Ovary (tissue), 10 donors: ENCODE measurements at regions of chr10 and their contacts with region 1.

Region 1: GRCh38 chr10:119650692-119651513 is at the start of gene BAG3:
- DNase-seq: peak; percentile 94 to 97 (median 95)
- H3K4me3 ChIP-seq: peak within 1 kb of the TSS; percentile 80
- H3K27ac ChIP-seq: peak within 1 kb of the TSS; percentile 88 to 93
- H3K4me1 ChIP-seq: peaks cover 11% of the 10 kb centered on the region
- H3K27me3 ChIP-seq: no peaks in the 10 kb centered on the region
- CTCF ChIP-seq: no peak
- EP300 ChIP-seq: no peak
- POLR2A ChIP-seq: peak; percentile 70
- total RNA-seq, gene BAG3: 13.7 to 33.5 (median 29.6) TPM

Region 2: GRCh38 chr10:119596537-119597404 is 54.1 kb before region 1 on chr10 and contains the start of gene TIAL1:
- intact Hi-C with region 1: loop called in 2 of 4 experiments (anchors 5 to 10 kb)
- DNase-seq: peak; percentile 95 to 97 (median 96)
- H3K4me3 ChIP-seq: peak within 1 kb of the TSS; percentile 96
- H3K27ac ChIP-seq: peak within 1 kb of the TSS; percentile 93 to 99
- H3K4me1 ChIP-seq: peaks cover 3% of the 10 kb centered on the region
- H3K27me3 ChIP-seq: no peaks in the 10 kb centered on the region
- CTCF ChIP-seq: peak in 1 of 3 donors; percentile 10
- EP300 ChIP-seq: no peak
- POLR2A ChIP-seq: no peak
- total RNA-seq, gene TIAL1: 58.9 to 113 (median 110) TPM

Region 3: GRCh38 chr10:119602241-119603095 is 48.4 kb before region 1 on chr10:
- intact Hi-C with region 1: loop called in 2 of 4 experiments (anchors 5 to 10 kb)
- DNase-seq: no peak
- H3K4me3 ChIP-seq: no peak overlapping the region
- H3K27ac ChIP-seq: no peak overlapping the region
- H3K4me1 ChIP-seq: peaks cover 1% of the 10 kb centered on the region
- H3K27me3 ChIP-seq: no peaks in the 10 kb centered on the region
- CTCF ChIP-seq: no peak
- EP300 ChIP-seq: no peak
- POLR2A ChIP-seq: no peak

Region 4: DNA sequence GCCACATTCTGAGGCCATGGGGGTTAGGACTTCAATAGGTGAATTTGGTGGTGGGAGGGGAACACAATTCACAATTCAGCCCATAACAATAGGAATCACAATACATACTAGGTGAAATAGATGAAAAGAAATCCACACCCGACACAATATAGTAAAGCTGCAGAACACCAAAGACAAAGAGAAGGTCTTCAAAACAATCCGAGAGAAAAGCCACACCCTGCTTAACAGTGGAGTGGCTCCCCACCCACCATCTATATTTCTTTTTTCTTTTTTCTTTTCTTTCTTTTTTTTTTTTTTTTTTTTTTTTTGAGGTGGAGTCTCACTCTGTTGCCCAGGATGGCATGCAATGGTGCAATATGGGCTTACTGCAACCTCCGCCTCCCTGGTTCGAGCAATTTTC is 39.5 kb before region 1 on chr10:
- intact Hi-C with region 1: loop called in 1 of 4 experiments (anchors 2 kb)
- DNase-seq: no peak
- H3K4me3 ChIP-seq: no peak overlapping the region
- H3K27ac ChIP-seq: no peak overlapping the region
- H3K4me1 ChIP-seq: no peaks in the 10 kb centered on the region
- H3K27me3 ChIP-seq: no peaks in the 10 kb centered on the region
- CTCF ChIP-seq: no peak
- EP300 ChIP-seq: no peak
- POLR2A ChIP-seq: no peak

Region 5: GRCh38 chr10:119693262-119693957 is 42.5 kb after region 1 on chr10:
- intact Hi-C with region 1: no loop called
- DNase-seq: no peak
- H3K4me3 ChIP-seq: no peak overlapping the region
- H3K27ac ChIP-seq: no peak overlapping the region
- H3K4me1 ChIP-seq: no peaks in the 10 kb centered on the region
- H3K27me3 ChIP-seq: no peaks in the 10 kb centered on the region
- CTCF ChIP-seq: no peak
- EP300 ChIP-seq: no peak
- POLR2A ChIP-seq: no peak